Activated naive CD4-positive, alpha-beta T cell treated with anti-CD3 and anti-CD28 coated beads, Interleukin-2, amount 10 ng/mL, durations not matched to agents 7 days and 5 days (primary cell): ENCODE measurements at regions of chr19 and their contacts with region 1.

Region 1: GRCh38 chr19:33406521-33407139 is 33.1 kb downstream of the CEBPG start:
- DNase-seq: peak; percentile 82
- H3K4me3 Mint-ChIP-seq: no peak overlapping the region
- H3K27ac Mint-ChIP-seq: no peak overlapping the region
- H3K4me1 Mint-ChIP-seq: no peaks in the 10 kb centered on the region
- H3K27me3 Mint-ChIP-seq: no peaks in the 10 kb centered on the region

Region 2: DNA sequence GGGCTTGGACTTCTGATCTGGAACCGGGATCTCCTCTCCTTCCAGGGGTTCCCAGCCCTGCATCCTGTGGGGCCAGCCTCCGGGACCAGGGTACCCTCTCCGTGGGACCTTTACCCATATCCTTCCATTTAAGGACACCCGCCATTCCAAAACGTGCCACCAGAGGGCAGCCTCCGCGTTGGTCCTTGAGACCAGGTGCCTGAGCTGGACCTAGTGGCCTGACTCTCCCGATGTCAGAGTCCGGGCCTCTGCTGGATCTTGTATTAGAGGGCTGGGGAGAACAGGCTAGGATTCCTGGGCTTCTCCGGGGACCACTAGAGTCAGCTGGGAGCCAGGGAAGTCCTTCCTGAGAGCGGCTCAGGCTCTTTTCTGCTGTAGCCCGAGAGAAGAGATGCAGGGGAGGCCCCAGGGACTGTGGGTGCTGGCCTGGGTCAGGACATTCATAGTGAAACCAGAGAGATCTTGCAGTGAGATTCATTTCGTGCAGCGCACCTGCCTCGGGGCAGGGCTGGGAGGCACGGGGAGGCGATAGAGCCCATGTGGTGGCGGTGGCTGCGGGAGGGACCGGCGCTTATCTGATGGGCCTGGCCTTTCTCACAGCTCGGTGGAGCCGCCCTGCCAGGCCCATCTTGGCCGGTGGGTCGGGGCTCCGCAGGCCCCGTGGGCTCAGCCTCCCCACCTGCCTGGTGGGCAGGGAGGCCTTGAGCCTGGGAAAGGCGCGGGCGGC is 171.2 kb before region 1 on chr19:
- CTCF ChIA-PET with region 1: interaction called, 43 read pairs
- DNase-seq: peak; percentile 80
- H3K4me3 Mint-ChIP-seq: no peak overlapping the region
- H3K27ac Mint-ChIP-seq: no peak overlapping the region
- H3K4me1 Mint-ChIP-seq: no peaks in the 10 kb centered on the region
- H3K27me3 Mint-ChIP-seq: peaks cover 8% of the 10 kb centered on the region

Region 3: DNA sequence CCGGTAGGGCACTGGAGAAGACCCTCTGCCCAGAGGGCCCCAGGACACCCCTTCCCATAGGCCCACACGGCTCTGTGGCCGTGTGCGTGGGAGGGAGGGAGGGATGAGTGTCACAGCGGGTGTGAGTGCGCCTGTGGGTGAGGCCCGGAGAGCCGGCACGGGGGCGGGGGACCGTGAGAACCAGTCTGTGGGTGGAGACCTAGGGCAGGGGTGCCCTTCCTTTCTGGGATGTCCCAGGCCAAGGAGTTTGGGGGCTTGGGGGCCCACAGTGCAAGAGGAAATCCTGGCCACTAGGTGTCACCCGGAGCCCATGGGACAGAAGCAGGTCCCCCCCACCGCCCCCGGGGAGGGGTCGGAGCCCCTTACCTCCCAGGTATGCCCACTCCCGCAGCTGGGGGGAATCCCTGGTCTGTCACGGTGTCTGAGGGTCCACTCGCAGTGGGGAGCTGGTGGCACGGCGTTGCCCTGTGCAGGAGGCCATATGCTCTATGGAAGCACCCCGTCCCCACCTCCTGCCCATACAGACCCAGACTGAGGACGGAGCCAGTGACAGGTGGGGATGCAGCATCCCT is 165.0 kb before region 1 on chr19:
- CTCF ChIA-PET with region 1: interaction called, 43 read pairs
- DNase-seq: no peak
- H3K4me3 Mint-ChIP-seq: no peak overlapping the region
- H3K27ac Mint-ChIP-seq: no peak overlapping the region
- H3K4me1 Mint-ChIP-seq: no peaks in the 10 kb centered on the region
- H3K27me3 Mint-ChIP-seq: peaks cover 7% of the 10 kb centered on the region

Region 4: DNA sequence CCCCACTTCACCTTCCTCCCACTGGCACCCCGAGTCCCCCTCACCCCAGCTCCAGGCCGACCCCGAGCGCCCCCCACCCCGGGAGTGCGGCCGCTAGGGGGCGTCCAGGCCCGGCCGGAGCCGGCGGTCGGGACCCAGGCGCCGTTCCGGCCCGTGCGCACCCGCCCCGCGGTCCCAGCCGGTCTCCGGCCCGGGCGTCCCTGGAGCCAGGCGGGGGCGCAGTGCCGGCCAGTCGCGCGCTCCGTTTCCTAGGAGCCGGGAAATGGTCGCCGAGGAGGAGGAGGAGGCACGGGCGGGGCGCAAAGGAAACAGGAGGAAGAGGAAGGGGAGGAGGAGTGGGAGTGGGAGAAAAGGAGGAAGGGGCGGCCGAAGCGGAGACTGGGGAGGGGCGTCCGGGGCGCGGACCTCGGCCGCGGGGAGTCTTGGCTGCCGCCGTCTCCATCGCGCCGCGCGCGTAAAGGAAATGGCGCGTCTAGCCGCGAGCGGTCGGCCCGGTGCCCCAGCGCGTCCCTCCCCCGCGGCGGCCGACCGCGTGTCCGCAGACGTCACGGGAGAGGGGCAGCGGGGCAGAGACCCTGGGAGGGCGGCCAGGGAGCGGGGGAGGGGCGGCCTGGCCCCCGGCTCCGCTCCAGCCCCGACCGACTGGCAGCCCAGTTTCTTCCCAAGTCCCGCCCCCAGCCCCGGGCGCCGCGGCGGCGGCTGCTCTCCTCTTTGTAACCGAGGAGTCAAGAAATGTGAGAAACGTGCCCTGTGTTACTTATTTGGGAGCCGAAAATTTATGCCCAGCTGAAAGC is 388.9 kb after region 1 on chr19:
- CTCF ChIA-PET with region 1: no interaction called
- DNase-seq: peak; percentile 48
- H3K4me3 Mint-ChIP-seq: peak overlapping the region; percentile 72
- H3K27ac Mint-ChIP-seq: no peak overlapping the region
- H3K4me1 Mint-ChIP-seq: peaks cover 4% of the 10 kb centered on the region
- H3K27me3 Mint-ChIP-seq: peaks cover 91% of the 10 kb centered on the region